ENCODE measurements at regions of chr5 and their contacts with region 1.

Region 1: GRCh38 chr5:75668977-75669689 is 48.1 kb downstream of the POC5 start:
- DNase-seq: peak; percentile 54 to 81 (median 61)
- H3K4me3 ChIP-seq: peak overlapping the region; percentile 7 to 66 (median 62)
- H3K4me3 Mint-ChIP-seq: peak overlapping the region; percentile 74 to 92
- H3K27ac ChIP-seq: peak overlapping the region in 1 of 2 donors; percentile 59
- H3K27ac Mint-ChIP-seq: peak overlapping the region; percentile 1 to 89 (median 77)
- H3K4me1 ChIP-seq: peaks cover 9 to 17% of the 10 kb centered on the region in 2 donors
- H3K4me1 Mint-ChIP-seq: peaks cover 22% of the 10 kb centered on the region
- H3K27me3 ChIP-seq: no peaks in the 10 kb centered on the region
- H3K27me3 Mint-ChIP-seq: no peaks in the 10 kb centered on the region
- CTCF ChIP-seq: no peak

Region 2: GRCh38 chr5:75236322-75237316 is 432.5 kb before region 1 on chr5 and contains the start of gene ANKRD31:
- intact Hi-C with region 1: loop called in 1 of 2 experiments (anchors 10 kb)
- DNase-seq: peak; percentile 80 to 84 (median 83)
- H3K4me3 ChIP-seq: peak within 1 kb of the TSS; percentile 56 to 87 (median 87)
- H3K4me3 Mint-ChIP-seq: peak within 1 kb of the TSS; percentile 87 to 97
- H3K27ac ChIP-seq: peak within 1 kb of the TSS; percentile 44 to 79
- H3K27ac Mint-ChIP-seq: peak within 1 kb of the TSS in 6 of 7 donors; percentile 75 to 93 (median 82)
- H3K4me1 ChIP-seq: peaks cover 9 to 13% of the 10 kb centered on the region in 2 donors
- H3K4me1 Mint-ChIP-seq: peaks cover 8% of the 10 kb centered on the region
- H3K27me3 ChIP-seq: peaks cover 0 to 8% of the 10 kb centered on the region in 2 donors
- H3K27me3 Mint-ChIP-seq: peaks cover 0 to 10% (median 8%) of the 10 kb centered on the region in 3 donors
- CTCF ChIP-seq: peak; percentile 89
- polyA plus RNA-seq, gene ANKRD31: 0.05 TPM in 1 of 3 donors, not detected in the others

Region 3: DNA sequence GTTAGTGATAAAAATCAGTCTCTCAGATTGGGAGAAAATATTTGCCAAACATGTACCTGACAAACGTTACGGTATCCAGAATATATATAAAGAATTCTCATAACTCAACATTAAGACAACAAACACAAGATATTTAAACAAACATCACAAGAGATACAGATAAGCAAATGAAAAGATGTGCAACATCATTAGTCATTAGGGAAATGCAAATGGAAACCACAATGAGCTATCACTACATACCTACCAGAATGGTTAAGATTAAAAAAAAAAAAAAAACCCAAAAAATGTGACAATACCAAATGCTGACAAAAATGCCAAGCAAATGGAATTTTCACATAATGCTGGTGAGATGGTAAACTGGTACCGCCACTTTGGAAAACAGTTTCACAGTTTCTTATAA is 173.1 kb before region 1 on chr5:
- intact Hi-C with region 1: loop called in 1 of 2 experiments (anchors 10 kb)
- DNase-seq: no peak
- H3K4me3 ChIP-seq: no peak overlapping the region
- H3K4me3 Mint-ChIP-seq: no peak overlapping the region
- H3K27ac ChIP-seq: no peak overlapping the region
- H3K27ac Mint-ChIP-seq: no peak overlapping the region
- H3K4me1 ChIP-seq: no peaks in the 10 kb centered on the region
- H3K4me1 Mint-ChIP-seq: no peaks in the 10 kb centered on the region
- H3K27me3 ChIP-seq: no peaks in the 10 kb centered on the region
- H3K27me3 Mint-ChIP-seq: no peaks in the 10 kb centered on the region
- CTCF ChIP-seq: no peak